ENCODE measurements at regions of chr4 and their contacts with region 1.

Region 1: DNA sequence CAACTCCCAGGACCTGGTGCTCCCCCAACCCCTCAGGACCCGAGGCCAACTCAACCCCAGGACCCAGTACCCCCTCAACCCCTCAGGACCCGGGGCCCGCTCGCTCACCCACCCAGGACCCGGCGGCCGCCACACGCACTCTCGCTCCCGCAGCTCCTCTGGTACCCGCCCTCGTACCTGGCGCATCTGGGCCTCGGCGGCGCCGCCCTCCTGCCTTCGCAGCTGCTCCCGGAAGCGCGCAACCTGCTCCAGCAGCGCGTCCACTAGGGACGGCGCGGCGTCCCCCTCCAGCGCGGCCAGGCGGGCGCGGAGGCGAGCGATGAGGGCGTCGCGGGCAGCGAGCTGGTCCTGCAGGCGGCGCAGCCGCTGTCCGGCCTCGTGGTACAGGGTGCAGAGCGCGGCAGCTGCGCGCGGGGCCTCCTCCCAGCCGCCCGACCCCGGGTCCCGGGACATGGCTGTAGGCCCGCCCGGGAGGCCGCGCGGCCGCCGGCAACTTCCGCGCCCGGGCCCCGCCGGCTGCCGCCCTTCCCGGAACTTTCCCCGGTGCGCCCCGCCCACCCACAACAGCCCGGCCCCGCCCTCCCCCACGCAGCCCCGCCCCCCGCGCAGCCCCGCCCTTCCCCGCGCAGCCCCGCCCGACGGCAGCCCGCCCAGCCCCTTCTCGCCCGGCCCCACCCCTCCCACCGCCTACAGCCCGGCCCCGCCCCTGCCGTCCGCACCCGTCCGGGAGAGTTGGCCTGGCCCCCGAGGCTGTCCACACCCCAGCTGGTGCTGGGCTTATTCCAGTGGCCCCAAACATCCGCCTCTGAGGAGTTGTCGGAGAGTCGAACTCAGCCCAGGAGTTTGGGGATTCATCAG is at the start of gene TNIP2:
- ATAC-seq: peak; percentile 86 to 93 (median 92)
- H3K4me3 ChIP-seq: peak within 1 kb of the TSS; percentile 56 to 81 (median 68)
- H3K27ac ChIP-seq: peak within 1 kb of the TSS; percentile 3 to 32
- H3K4me1 ChIP-seq: peaks cover 8 to 9% of the 10 kb centered on the region in 2 donors
- total RNA-seq, gene TNIP2: 10.5 to 42.8 (median 19.1) TPM

Region 2: DNA sequence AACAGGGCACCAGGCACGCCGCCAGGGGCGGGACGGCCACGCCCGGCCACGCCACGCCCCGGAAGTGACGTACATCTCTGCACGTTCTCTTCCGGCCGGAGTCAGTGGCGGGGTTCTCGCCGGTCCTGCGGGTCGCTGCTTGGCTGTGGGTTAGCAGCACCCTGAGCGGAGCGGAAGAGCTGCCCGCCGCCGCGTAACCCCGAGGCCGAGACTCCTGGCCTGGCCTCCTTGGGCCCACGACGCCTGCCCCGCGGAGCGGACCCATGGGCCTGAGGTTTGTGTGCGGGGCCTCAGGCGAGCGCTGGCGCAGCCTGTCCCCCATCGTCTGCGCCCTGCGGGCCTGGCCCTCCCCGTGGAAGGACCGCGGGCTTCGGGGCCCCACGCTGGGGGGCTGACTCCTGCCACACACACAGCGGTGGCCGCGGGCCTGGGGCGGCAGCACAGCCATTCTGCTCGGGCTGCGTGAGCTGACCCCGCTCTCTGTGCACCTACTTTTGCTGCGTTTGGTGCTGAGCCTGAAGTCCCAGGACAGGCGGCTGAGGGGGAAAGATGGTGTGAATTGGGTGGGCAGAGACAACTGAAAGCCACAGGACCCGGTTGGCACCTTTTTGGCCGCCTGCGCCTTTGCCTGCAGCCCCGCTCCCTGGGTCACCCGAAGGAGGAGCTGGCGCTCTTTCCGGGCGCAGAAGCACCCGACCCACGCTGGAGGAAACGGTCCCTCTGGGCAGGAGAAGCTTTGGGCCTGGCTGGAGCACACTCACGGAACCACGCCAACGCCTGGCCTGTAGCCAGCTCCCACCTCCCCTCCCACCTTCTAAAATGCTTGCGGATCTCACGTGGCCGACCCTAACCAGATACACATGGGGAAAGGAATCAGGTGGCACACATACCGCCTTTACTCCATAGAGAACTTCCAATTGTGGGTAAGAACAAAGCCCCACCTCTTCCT is 179.0 kb after region 1 on chr4:
- in situ Hi-C with region 1: loop called in 1 of 9 experiments (anchors 25 kb)
- ATAC-seq: peak; percentile 47 to 88 (median 84)
- H3K4me3 ChIP-seq: peak overlapping the region; percentile 72 to 97 (median 90)
- H3K27ac ChIP-seq: peak overlapping the region; percentile 63 to 82
- H3K4me1 ChIP-seq: peaks cover 14 to 16% of the 10 kb centered on the region in 2 donors

Measured in motor neuron (in vitro differentiated cells).